MCF 10A (cell line): ENCODE measurements at regions of chr9 and their contacts with region 1.

Region 1: GRCh38 chr9:117487555-117488175 is 72.8 kb upstream of the ASTN2 start:
- DNase-seq: peak; percentile 79
- H3K4me3 Mint-ChIP-seq: no peak overlapping the region
- H3K27ac Mint-ChIP-seq: no peak overlapping the region
- H3K4me1 Mint-ChIP-seq: no peaks in the 10 kb centered on the region
- H3K27me3 Mint-ChIP-seq: no peaks in the 10 kb centered on the region
- CTCF ChIP-seq: peak; percentile 75

Region 2: DNA sequence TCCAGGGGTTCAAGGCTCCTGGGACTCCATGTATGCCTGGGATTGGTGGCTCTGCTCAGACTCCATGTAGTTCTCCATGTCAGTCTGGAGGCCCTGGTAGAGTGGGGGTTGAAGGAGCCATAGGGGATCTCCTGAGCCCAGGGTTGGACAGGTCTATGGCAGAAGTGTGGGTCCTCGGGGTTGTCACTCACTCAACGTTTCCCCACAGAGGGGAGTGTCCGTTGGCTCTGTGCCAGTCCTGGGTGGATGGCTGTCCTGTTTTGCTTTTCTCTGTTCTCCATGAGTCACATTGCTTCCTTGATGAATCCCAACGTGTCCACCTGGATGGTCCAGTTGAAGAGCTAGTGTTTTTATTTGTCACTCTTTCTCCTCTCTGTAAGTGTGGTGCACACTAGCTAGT is 21.0 kb after region 1 on chr9:
- CTCF ChIA-PET with region 1: interaction called, 17 read pairs
- POLR2A ChIA-PET with region 1: no interaction called
- intact Hi-C with region 1: no loop called
- DNase-seq: no peak
- H3K4me3 Mint-ChIP-seq: no peak overlapping the region
- H3K27ac Mint-ChIP-seq: no peak overlapping the region
- H3K4me1 Mint-ChIP-seq: no peaks in the 10 kb centered on the region
- H3K27me3 Mint-ChIP-seq: no peaks in the 10 kb centered on the region
- CTCF ChIP-seq: no peak

Region 3: GRCh38 chr9:117555964-117556629 is 68.4 kb after region 1 on chr9:
- CTCF ChIA-PET with region 1: interaction called, 9 read pairs
- POLR2A ChIA-PET with region 1: interaction called, 3 read pairs
- intact Hi-C with region 1: loop called (anchors 5 kb)
- DNase-seq: peak; percentile 79
- H3K4me3 Mint-ChIP-seq: no peak overlapping the region
- H3K27ac Mint-ChIP-seq: no peak overlapping the region
- H3K4me1 Mint-ChIP-seq: no peaks in the 10 kb centered on the region
- H3K27me3 Mint-ChIP-seq: no peaks in the 10 kb centered on the region
- CTCF ChIP-seq: peak; percentile 41